ENCODE measurements at regions of chr9 and their contacts with region 1.

Region 1: DNA sequence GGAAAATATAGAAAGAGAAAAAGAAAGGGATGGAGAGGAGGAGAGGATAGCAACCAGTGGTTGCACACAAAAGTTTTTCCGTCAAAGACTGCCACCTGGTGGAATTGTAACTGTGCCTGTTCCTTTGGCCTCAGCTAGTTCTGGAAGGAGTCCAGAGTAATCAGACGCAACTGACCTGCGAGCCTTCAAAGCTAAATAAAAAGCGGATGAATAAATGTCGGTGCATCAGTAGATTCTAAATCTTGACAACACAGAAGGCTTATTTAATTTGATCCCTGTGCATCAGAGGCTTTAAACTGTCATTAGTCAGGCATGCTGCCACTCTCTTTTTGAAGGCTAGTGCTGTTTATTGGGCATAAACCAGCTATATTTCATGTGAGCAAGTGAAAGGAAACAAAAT is 132.9 kb upstream of the ACO1 start:
- DNase-seq: peak; percentile 24
- ATAC-seq: peak; percentile 83
- H3K4me3 ChIP-seq: no peak overlapping the region
- H3K27ac ChIP-seq: no peak overlapping the region
- H3K4me1 ChIP-seq: no peaks in the 10 kb centered on the region
- H3K27me3 ChIP-seq: no peaks in the 10 kb centered on the region
- CTCF ChIP-seq: peak; percentile 36 to 75 (median 66); a peak in 5 of 6 replicates
- POLR2A ChIP-seq: no peak
- RAD21 ChIP-seq: peak; percentile 66

Region 2: DNA sequence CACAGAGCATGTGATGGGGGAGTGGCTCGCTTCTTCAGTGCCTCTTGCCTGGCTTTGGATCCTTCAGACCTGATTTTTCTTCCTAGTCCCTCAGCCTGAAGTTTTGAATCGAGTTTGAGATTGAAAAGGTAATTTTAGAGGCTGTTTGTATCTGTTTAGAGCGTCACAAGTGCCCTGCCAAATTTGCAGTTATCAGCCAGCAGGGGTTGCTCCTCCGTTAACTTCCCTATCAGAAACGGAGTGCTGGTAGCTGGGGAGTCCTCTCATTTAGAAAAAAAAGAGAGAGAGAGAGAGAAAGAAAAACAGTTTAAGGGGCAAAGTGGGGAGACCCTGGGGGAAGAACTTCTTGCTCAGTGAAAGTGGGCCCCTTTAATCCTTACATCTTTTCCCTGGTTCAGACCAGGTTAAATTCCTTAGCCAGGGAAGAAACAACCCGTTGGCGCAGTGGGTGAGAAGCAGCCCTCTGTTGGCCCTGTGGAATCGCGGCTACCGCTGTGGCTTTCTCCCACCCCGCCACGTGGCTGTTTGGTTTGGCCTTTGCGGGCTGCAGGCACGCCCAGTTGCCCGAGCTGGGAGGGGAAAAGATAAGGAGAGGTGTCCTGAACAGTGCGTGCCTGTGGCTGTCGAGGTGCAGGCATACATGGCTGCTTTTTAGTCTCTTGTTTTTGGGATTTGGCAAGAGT is 443.8 kb before region 1 on chr9:
- CTCF ChIA-PET with region 1: interaction called, 3 read pairs
- POLR2A ChIA-PET with region 1: no interaction called
- RAD21 ChIA-PET with region 1: no interaction called
- intact Hi-C with region 1: loop called (anchors 5 kb)
- DNase-seq: peak; percentile 51
- ATAC-seq: peak; percentile 98
- H3K4me3 ChIP-seq: peak overlapping the region; percentile 9 to 23
- H3K27ac ChIP-seq: no peak overlapping the region
- H3K4me1 ChIP-seq: no peaks in the 10 kb centered on the region
- H3K27me3 ChIP-seq: no peaks in the 10 kb centered on the region
- CTCF ChIP-seq: peak; percentile 48 to 56 (median 49); a peak in 5 of 6 replicates
- POLR2A ChIP-seq: no peak
- RAD21 ChIP-seq: peak; percentile 47

Region 3: DNA sequence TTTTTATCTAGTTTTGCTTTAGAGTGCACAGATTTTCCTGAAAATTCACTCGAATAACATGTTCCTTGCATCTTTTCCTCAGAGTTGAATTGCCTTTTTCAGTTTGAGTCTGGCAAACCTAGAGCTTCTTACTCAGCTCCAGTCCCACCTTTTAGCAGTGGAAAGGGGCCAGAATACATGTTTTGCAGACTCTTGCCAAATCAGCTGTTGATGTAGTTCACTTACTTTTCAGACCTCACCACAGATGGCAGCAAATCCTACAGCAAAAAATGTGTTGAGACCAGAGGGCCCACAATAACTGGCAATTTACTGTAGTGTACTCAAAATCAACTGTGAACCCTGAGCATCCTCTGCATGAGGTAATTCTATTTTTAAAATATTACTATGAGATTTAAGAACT is 412.3 kb before region 1 on chr9:
- CTCF ChIA-PET with region 1: interaction called, 5 read pairs
- POLR2A ChIA-PET with region 1: no interaction called
- RAD21 ChIA-PET with region 1: no interaction called
- intact Hi-C with region 1: loop called (anchors 2 kb)
- DNase-seq: no peak
- ATAC-seq: peak; percentile 55; the same call in 1 of the 2 replicates
- H3K4me3 ChIP-seq: no peak overlapping the region
- H3K27ac ChIP-seq: no peak overlapping the region
- H3K4me1 ChIP-seq: no peaks in the 10 kb centered on the region
- H3K27me3 ChIP-seq: no peaks in the 10 kb centered on the region
- CTCF ChIP-seq: 0 out of 6 replicates have a peak, but pooled peaks have one; percentile 9 to 16 (median 13)
- POLR2A ChIP-seq: no peak
- RAD21 ChIP-seq: peak; percentile 42; the same call in 1 of the 2 replicates

Region 4: GRCh38 chr9:31916591-31917241 is 334.8 kb before region 1 on chr9:
- CTCF ChIA-PET with region 1: no interaction called
- POLR2A ChIA-PET with region 1: no interaction called
- RAD21 ChIA-PET with region 1: no interaction called
- intact Hi-C with region 1: loop called (anchors 10 kb)
- DNase-seq: no peak
- ATAC-seq: no peak
- H3K4me3 ChIP-seq: no peak overlapping the region
- H3K27ac ChIP-seq: no peak overlapping the region
- H3K4me1 ChIP-seq: no peaks in the 10 kb centered on the region
- H3K27me3 ChIP-seq: no peaks in the 10 kb centered on the region
- CTCF ChIP-seq: 0 out of 6 replicates have a peak, but pooled peaks of 1 of the 3 experiments have one; percentile 14
- POLR2A ChIP-seq: no peak
- RAD21 ChIP-seq: peak; percentile 26; the same call in 1 of the 2 replicates

Region 5: GRCh38 chr9:32200896-32201295 is 50.6 kb before region 1 on chr9:
- CTCF ChIA-PET with region 1: no interaction called
- POLR2A ChIA-PET with region 1: no interaction called
- RAD21 ChIA-PET with region 1: no interaction called
- intact Hi-C with region 1: no loop called
- DNase-seq: no peak
- ATAC-seq: no peak
- H3K4me3 ChIP-seq: no peak overlapping the region
- H3K27ac ChIP-seq: no peak overlapping the region
- H3K4me1 ChIP-seq: no peaks in the 10 kb centered on the region
- H3K27me3 ChIP-seq: no peaks in the 10 kb centered on the region
- CTCF ChIP-seq: no peak
- POLR2A ChIP-seq: no peak
- RAD21 ChIP-seq: no peak

Region 6: DNA sequence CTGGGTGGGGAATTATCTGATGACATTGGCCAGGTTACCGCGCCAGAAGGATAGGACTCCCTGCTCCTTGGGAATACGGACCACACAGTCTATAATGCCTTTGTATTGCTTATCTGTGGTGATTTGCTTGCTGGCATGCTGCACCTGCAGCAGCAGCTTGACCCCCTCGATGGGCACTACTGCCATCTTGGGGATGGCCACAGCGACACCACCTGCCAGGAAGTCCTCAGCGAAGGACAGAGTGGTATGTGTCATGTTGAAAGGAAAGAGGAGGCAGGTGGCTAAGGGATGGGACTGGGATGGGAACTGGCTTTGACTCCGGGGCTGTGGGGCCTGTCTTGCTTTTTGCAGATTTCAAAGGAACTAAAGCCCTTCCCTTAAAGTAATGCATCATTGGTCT is 82.6 kb after region 1 on chr9:
- CTCF ChIA-PET with region 1: no interaction called
- POLR2A ChIA-PET with region 1: no interaction called
- RAD21 ChIA-PET with region 1: no interaction called
- intact Hi-C with region 1: no loop called
- DNase-seq: no peak
- ATAC-seq: no peak
- H3K4me3 ChIP-seq: no peak overlapping the region
- H3K27ac ChIP-seq: no peak overlapping the region
- H3K4me1 ChIP-seq: no peaks in the 10 kb centered on the region
- H3K27me3 ChIP-seq: no peaks in the 10 kb centered on the region
- CTCF ChIP-seq: peak in 1 of 3 experiments; percentile 15; a peak in 1 of 6 replicates
- POLR2A ChIP-seq: no peak
- RAD21 ChIP-seq: no peak

Region 7: GRCh38 chr9:32755730-32756129 is 504.2 kb after region 1 on chr9:
- CTCF ChIA-PET with region 1: no interaction called
- POLR2A ChIA-PET with region 1: no interaction called
- RAD21 ChIA-PET with region 1: no interaction called
- intact Hi-C with region 1: no loop called
- DNase-seq: no peak
- ATAC-seq: no peak
- H3K4me3 ChIP-seq: no peak overlapping the region
- H3K27ac ChIP-seq: no peak overlapping the region
- H3K4me1 ChIP-seq: no peaks in the 10 kb centered on the region
- H3K27me3 ChIP-seq: 0 out of 2 replicates have a peak, but pooled peaks cover 8% of the 10 kb centered on the region
- CTCF ChIP-seq: no peak
- POLR2A ChIP-seq: no peak
- RAD21 ChIP-seq: no peak